Mammary epithelial cell (primary cell): ENCODE measurements at regions of chr6 and their contacts with region 1.

Region 1: GRCh38 chr6:90296346-90297114 is at the start of gene BACH2:
- DNase-seq: peak; percentile 90
- H3K4me3 ChIP-seq: peak within 1 kb of the TSS; percentile 67 to 85 (median 73)
- H3K27ac ChIP-seq: no peak within 1 kb of the TSS
- H3K4me1 ChIP-seq: peaks cover 18% of the 10 kb centered on the region
- H3K27me3 ChIP-seq: peaks cover 2% of the 10 kb centered on the region
- CTCF ChIP-seq: peak in 1 of 2 donors; percentile 35
- total RNA-seq, gene BACH2: 3.6 to 4.5 TPM

Region 2: GRCh38 chr6:89597988-89598692 is 698.4 kb before region 1 on chr6:
- CTCF ChIA-PET with region 1: no interaction called
- dilution Hi-C with region 1: no loop called
- in situ Hi-C with region 1: no loop called
- intact Hi-C with region 1: no loop called
- DNase-seq: peak; percentile 76
- H3K4me3 ChIP-seq: no peak overlapping the region
- H3K27ac ChIP-seq: no peak overlapping the region
- H3K4me1 ChIP-seq: no peaks in the 10 kb centered on the region
- H3K27me3 ChIP-seq: no peaks in the 10 kb centered on the region
- CTCF ChIP-seq: peak; percentile 21 to 45

Region 3: GRCh38 chr6:89970609-89971337 is 325.8 kb before region 1 on chr6:
- CTCF ChIA-PET with region 1: no interaction called
- dilution Hi-C with region 1: loop called (anchors 25 kb)
- in situ Hi-C with region 1: loop called in 1 of 2 experiments (anchors 25 kb)
- intact Hi-C with region 1: loop called (anchors 1 kb)
- DNase-seq: peak; percentile 45
- H3K4me3 ChIP-seq: no peak overlapping the region
- H3K27ac ChIP-seq: no peak overlapping the region
- H3K4me1 ChIP-seq: peaks cover 6% of the 10 kb centered on the region
- H3K27me3 ChIP-seq: no peaks in the 10 kb centered on the region
- CTCF ChIP-seq: peak; percentile 54 to 64

Region 4: GRCh38 chr6:90179190-90180169 is 117.0 kb before region 1 on chr6:
- CTCF ChIA-PET with region 1: no interaction called
- dilution Hi-C with region 1: loop called (anchors 25 kb)
- in situ Hi-C with region 1: no loop called
- intact Hi-C with region 1: no loop called
- DNase-seq: no peak
- H3K4me3 ChIP-seq: no peak overlapping the region
- H3K27ac ChIP-seq: no peak overlapping the region
- H3K4me1 ChIP-seq: peaks cover 17% of the 10 kb centered on the region
- H3K27me3 ChIP-seq: no peaks in the 10 kb centered on the region
- CTCF ChIP-seq: peak; percentile 40 to 43

Region 5: GRCh38 chr6:90393232-90393884 is 96.8 kb after region 1 on chr6:
- CTCF ChIA-PET with region 1: no interaction called
- dilution Hi-C with region 1: no loop called
- in situ Hi-C with region 1: no loop called
- intact Hi-C with region 1: loop called (anchors 1 kb)
- DNase-seq: peak; percentile 57
- H3K4me3 ChIP-seq: no peak overlapping the region
- H3K27ac ChIP-seq: no peak overlapping the region
- H3K4me1 ChIP-seq: no peaks in the 10 kb centered on the region
- H3K27me3 ChIP-seq: no peaks in the 10 kb centered on the region
- CTCF ChIP-seq: peak; percentile 75 to 80

Region 6: DNA sequence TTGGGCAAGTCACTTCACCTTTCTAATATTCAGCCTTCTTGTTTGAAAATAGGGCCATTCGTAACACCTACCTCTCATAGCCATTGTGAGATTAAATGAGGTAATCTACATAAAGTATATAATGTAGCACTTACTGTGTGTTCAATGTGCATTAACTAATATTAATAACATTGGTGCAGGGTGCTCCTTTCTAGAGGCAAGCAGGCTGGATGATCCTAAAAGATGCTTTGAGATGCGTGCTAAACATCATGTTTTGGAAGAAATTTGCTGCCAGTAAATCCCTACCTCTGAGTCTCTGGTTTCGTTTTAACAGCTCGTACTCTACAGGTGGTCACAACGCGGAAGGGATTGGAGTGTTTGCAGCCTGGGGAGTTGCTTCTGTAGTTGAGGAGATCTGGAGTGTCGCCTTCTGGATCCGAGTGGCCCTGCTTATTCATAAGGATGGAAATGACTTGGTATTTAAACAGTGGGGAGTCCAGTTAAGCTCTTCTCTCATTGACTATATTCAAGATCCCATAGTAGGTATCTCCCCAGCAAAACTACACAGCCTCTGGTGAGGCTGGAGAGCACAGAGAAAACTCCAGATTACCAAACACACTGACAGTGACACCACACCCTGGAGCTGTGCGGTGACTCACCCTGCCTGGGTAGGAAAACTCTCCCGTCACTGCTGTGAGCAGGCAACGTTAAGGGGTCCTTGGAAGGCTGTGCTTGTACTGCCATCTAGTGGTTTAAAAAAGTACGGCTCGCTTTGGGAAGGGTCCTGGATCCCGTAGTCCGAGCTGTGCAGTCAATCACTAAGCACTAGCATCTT is 182.5 kb after region 1 on chr6:
- CTCF ChIA-PET with region 1: no interaction called
- dilution Hi-C with region 1: no loop called
- in situ Hi-C with region 1: loop called in 1 of 2 experiments (anchors 10 kb)
- intact Hi-C with region 1: loop called (anchors 1 kb)
- DNase-seq: peak; percentile 93
- H3K4me3 ChIP-seq: no peak overlapping the region
- H3K27ac ChIP-seq: no peak overlapping the region
- H3K4me1 ChIP-seq: peaks cover 16% of the 10 kb centered on the region
- H3K27me3 ChIP-seq: no peaks in the 10 kb centered on the region
- CTCF ChIP-seq: peak; percentile 80 to 88